ENCODE measurements at regions of chr2 and their contacts with region 1.

Region 1: DNA sequence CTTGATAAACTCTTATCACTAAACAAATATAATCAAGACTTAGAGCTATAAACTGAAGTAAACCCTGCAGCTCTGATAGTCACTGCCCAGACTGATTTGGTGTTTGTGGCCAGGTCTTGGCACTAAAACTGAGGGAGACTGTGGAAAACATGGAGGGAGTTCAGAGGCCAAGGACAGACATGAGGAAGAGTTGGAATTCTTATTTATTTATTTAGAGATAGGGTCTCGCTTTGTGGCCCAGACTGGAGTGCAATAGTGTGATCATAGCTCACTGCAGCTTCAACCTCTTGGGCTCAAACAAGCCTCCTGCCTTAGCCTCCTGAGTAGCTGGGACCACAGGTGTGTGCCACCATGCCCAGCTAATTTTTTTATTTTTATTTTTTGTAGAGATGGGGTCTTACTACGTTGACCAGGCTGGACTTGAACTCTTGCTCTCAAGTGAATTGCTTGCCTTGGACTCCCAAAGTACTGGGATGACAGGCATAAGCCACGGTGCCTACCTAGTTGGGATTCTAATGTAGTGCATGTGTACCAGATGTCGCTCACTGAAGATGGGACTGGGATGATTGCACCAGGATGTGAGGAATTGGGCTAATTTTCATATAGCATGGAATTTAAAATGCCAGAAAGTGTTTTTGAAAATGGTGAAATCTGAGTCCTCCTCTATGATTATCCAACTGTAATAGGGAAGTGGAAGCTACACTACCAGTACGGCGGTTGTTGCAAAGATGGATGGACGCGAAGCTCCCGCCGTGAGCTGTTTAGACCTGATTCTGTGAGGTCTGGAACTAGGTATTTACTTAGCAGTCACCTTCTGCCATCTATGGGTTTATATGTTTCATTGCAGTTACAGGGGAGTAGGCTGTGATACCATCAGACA is 52.7 kb upstream of the CTLA4 start:
- DNase-seq: no peak
- H3K4me3 ChIP-seq: no peak overlapping the region
- H3K27ac ChIP-seq: no peak overlapping the region
- H3K4me1 ChIP-seq: no peaks in the 10 kb centered on the region
- H3K27me3 ChIP-seq: no peaks in the 10 kb centered on the region
- CTCF ChIP-seq: peak in 2 of 3 experiments; percentile 60 to 79; a peak in 3 of 4 replicates
- EP300 ChIP-seq: no peak
- POLR2A ChIP-seq: no peak
- RAD21 ChIP-seq: peak; percentile 95

Region 2: GRCh38 chr2:203484266-203485112 is 330.4 kb before region 1 on chr2:
- CTCF ChIA-PET with region 1: interaction called, 28 read pairs
- POLR2A ChIA-PET with region 1: no interaction called
- DNase-seq: no peak
- H3K4me3 ChIP-seq: no peak overlapping the region
- H3K27ac ChIP-seq: peak overlapping the region; percentile 12; the same call in 1 of the 2 replicates
- H3K4me1 ChIP-seq: peaks cover 0 to 8% (median 4%) of the 10 kb centered on the region in 4 experiments; a peak in 3 of 7 replicates
- H3K27me3 ChIP-seq: peaks cover 0 to under 1% (median 0%) of the 10 kb centered on the region in 4 experiments; a peak in 1 of 7 replicates
- CTCF ChIP-seq: peak; percentile 49 to 81 (median 71)
- EP300 ChIP-seq: no peak
- POLR2A ChIP-seq: no peak
- RAD21 ChIP-seq: peak; percentile 93

Region 3: DNA sequence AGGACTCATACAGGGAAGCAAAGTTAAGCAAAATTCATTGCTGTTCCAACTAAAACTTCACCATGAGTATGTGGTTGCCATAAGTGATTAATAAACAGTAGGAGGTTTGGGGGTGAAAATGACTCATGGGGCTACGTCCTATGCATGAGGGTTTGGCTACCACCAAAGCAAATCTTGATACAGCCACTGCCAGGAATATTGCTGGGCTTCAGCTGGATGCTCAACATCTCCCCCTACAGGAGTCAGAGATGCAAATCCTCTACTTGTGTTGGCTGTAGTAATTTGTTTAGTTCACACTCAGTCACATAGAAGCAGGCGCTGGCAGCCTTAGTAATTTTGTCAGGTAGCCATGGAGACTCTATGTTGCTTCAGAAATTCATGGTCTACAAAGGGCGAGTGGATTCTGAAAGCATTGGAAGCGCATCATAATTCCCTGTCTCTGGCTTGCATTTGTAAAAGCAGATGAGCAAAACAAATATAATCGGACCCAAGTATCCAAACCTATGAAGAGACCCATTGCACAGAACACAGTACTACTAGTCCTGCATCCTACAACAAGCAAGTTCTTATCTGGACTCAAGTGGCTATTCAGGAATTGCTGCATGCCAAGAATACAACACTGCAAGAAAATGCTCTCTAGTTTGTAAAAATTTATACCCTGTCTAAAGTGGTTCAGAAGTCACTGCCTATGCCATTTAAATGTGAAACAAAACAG is 32.5 kb before region 1 on chr2:
- CTCF ChIA-PET with region 1: interaction called, 14 read pairs
- POLR2A ChIA-PET with region 1: no interaction called
- DNase-seq: peak; percentile 21 to 58
- H3K4me3 ChIP-seq: no peak overlapping the region
- H3K27ac ChIP-seq: no peak overlapping the region
- H3K4me1 ChIP-seq: peaks cover 0 to 3% (median 0%) of the 10 kb centered on the region in 4 experiments; a peak in 2 of 7 replicates
- H3K27me3 ChIP-seq: no peaks in the 10 kb centered on the region
- CTCF ChIP-seq: peak; percentile 28 to 88 (median 68)
- EP300 ChIP-seq: no peak
- POLR2A ChIP-seq: no peak
- RAD21 ChIP-seq: peak; percentile 66 to 74

Region 4: DNA sequence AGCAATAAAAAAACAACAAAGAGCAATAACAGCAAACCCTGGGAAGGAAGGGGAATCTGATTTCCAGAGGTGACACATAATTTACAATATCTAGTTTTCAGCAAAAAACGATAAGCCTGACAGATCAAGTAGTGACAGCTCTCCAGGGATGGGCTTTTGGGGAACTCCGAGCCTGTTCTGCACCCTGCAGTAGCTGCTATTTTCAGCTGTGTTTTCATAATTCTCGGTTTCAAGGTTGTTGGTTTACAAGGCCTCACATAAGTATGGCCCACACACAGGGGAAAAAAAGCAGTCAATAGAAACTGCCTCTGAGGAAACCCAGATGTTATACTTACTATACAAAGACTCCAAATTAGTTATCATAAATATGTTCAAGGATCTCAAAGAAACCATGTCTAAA is 15.0 kb before region 1 on chr2:
- CTCF ChIA-PET with region 1: interaction called, 12 read pairs
- POLR2A ChIA-PET with region 1: no interaction called
- DNase-seq: no peak
- H3K4me3 ChIP-seq: no peak overlapping the region
- H3K27ac ChIP-seq: no peak overlapping the region
- H3K4me1 ChIP-seq: peaks cover 0 to 4% (median 0%) of the 10 kb centered on the region in 4 experiments; a peak in 2 of 7 replicates
- H3K27me3 ChIP-seq: no peaks in the 10 kb centered on the region
- CTCF ChIP-seq: no peak
- EP300 ChIP-seq: no peak
- POLR2A ChIP-seq: no peak
- RAD21 ChIP-seq: no peak